ENCODE measurements at regions of chr9 and their contacts with region 1.

Region 1: DNA sequence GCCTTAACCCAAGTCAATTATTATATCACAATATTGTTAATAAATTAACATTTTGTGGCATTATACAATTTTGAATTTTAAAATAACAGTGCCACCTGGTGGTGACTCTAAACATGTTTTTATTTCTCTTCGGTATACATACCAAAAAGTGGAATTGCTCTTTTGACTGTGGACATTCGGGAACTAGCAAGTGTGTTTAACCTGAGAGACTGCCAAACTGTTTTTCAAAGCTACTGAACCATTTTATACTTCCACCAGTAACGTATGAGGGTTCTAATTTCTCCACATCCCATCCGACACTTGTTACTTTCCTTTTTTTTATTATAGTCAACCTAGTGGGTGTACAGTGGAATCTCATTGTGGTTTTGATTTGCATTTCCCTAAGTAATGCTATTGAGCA is 18.3 kb upstream of the HSDL2 start:
- DNase-seq: no peak
- H3K4me3 ChIP-seq: no peak overlapping the region
- H3K27ac ChIP-seq: no peak overlapping the region
- H3K4me1 ChIP-seq: no peaks in the 10 kb centered on the region
- H3K27me3 ChIP-seq: no peaks in the 10 kb centered on the region
- CTCF ChIP-seq: peak; percentile 58 to 69 (median 69)
- POLR2A ChIP-seq: no peak

Region 2: GRCh38 chr9:111983484-111983908 is 378.1 kb before region 1 on chr9:
- intact Hi-C with region 1: no loop called
- DNase-seq: no peak
- H3K4me3 ChIP-seq: no peak overlapping the region
- H3K27ac ChIP-seq: no peak overlapping the region
- H3K4me1 ChIP-seq: peaks cover 0 to 3% of the 10 kb centered on the region in 2 donors
- H3K27me3 ChIP-seq: no peaks in the 10 kb centered on the region
- CTCF ChIP-seq: no peak
- POLR2A ChIP-seq: no peak

Region 3: GRCh38 chr9:112097712-112098688 is 263.6 kb before region 1 on chr9:
- intact Hi-C with region 1: loop called (anchors 10 kb)
- DNase-seq: no peak
- H3K4me3 ChIP-seq: no peak overlapping the region
- H3K27ac ChIP-seq: no peak overlapping the region
- H3K4me1 ChIP-seq: no peaks in the 10 kb centered on the region
- H3K27me3 ChIP-seq: no peaks in the 10 kb centered on the region
- CTCF ChIP-seq: peak; percentile 61 to 75 (median 71)
- POLR2A ChIP-seq: no peak

Region 4: DNA sequence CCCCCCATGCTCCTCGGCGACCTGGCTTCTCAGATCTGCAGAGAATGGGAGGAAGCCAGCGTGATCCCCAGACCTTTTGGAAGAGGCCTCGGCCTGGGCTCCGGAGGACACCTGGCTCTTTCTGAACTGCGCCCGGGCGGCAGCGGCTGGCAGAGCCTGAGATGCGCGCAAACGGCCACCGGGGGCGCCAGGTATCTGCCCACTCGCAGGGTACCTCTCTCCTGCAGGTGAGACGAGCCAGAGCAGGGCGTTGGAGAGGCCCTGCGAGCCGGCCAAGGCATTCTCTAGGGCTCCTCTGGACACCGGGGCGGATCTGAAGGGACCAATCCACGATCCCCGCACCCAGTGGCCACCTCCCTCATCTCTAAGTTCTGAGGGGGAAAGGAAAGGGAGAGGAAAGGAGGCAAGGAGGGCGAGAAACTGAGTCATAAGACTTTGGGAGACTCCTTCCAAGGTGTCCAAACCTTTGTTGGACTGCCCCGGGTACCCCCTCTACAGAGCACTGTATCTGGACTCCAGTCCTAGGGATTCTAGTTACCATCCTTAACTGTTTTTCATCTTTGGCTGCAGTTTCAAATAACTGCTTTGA is 584.1 kb after region 1 on chr9:
- intact Hi-C with region 1: no loop called
- DNase-seq: no peak
- H3K4me3 ChIP-seq: no peak overlapping the region
- H3K27ac ChIP-seq: no peak overlapping the region
- H3K4me1 ChIP-seq: no peaks in the 10 kb centered on the region
- H3K27me3 ChIP-seq: peaks cover 0 to 11% of the 10 kb centered on the region in 2 donors
- CTCF ChIP-seq: no peak
- POLR2A ChIP-seq: no peak

Region 5: GRCh38 chr9:113011911-113012381 is 650.3 kb after region 1 on chr9 and contains the start of gene ZNF883:
- intact Hi-C with region 1: no loop called
- DNase-seq: peak in 1 of 2 donors; percentile 61
- H3K4me3 ChIP-seq: peak within 1 kb of the TSS; percentile 11 to 69 (median 37)
- H3K27ac ChIP-seq: no peak within 1 kb of the TSS
- H3K4me1 ChIP-seq: no peaks in the 10 kb centered on the region
- H3K27me3 ChIP-seq: no peaks in the 10 kb centered on the region
- CTCF ChIP-seq: no peak
- POLR2A ChIP-seq: no peak
- total RNA-seq, gene ZNF883: 1.4 to 4.6 (median 2.6) TPM

Measured in breast epithelium (tissue), 4 donors.